Cardiac septum (tissue), 1 donor: ENCODE measurements at regions of chr19 and their contacts with region 1.

Region 1: GRCh38 chr19:38899447-38900219 is at the starts of genes NFKBIB and SIRT2:
- DNase-seq: peak; percentile 100
- total RNA-seq, gene NFKBIB: 22.0 TPM
- total RNA-seq, gene SIRT2: 49.6 TPM

Region 2: GRCh38 chr19:38849860-38850435 is 49.7 kb before region 1 on chr19 and contains the start of gene HNRNPL:
- intact Hi-C with region 1: loop called (anchors 5 kb)
- DNase-seq: peak; percentile 100
- total RNA-seq, gene HNRNPL: 136 TPM

Region 3: DNA sequence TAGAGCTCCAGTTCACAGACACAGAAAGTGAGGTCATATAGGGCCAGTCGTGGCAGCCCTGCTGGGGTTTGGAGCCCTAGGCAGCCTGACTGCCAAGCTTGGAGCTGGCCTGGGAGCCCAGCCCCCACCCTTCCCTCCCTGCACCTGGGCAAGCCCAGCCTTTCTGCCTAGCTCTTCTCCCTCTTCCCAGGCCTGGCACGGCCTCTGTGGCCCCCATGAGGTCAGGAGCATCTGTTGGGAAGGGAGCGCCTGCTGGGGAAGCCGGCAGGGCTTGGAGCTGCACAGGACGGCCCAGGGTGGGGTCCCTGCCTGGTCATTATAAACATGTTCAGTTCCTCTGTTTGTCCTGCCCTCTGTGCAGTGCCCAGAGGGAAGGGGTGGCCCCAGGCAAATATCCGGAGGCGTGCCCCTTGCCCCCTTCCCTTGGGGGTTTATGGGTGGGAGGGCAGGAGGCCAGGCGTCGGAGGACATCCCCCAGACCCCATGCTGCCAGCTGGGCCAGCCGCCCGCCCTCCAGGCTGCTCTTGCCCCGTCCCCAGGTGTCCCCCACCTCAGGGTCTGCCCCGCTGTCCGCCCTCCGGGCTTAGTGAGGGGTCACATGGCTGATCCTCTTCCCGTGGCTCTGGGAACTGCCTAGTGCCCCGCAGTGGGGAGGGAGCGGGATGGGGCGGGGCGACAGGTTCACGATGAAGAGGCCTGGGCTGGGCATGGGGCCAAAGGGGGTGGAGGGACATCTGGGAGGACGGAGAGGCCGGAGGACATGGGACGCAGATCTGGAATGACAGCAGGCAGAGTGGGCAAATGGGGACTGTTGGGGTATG is 267.1 kb after region 1 on chr19:
- intact Hi-C with region 1: no loop called
- DNase-seq: peak; percentile 83